ENCODE measurements at regions of chr19 and their contacts with region 1.

Region 1: DNA sequence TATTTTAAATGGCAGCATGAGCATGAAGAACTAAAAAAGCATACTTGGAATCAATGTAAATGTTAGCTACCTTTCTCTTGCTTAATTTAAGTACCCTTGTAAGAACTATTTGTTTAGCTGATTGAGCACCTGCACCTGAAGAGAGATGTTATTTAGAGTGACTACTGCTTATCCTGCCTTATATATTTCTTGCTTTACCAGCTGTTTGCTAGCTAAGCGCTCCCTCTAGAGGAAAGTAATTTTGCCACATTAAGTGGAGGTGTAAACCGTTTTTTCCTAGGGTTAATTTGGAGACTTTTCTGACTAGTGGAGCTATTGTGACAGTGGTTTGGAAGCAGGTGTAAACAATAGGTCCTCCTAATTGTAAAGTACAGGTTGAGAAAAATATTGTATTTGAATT is 19.4 kb upstream of the PSG2 start:
- DNase-seq: peak; percentile 24
- ATAC-seq: no peak
- H3K4me3 ChIP-seq: no peak overlapping the region
- H3K27ac ChIP-seq: no peak overlapping the region
- H3K4me1 ChIP-seq: peaks cover 6% of the 10 kb centered on the region; the same call in 1 of the 2 replicates
- H3K27me3 ChIP-seq: no peaks in the 10 kb centered on the region
- CTCF ChIP-seq: peak; percentile 39; the same call in 1 of the 2 replicates

Region 2: DNA sequence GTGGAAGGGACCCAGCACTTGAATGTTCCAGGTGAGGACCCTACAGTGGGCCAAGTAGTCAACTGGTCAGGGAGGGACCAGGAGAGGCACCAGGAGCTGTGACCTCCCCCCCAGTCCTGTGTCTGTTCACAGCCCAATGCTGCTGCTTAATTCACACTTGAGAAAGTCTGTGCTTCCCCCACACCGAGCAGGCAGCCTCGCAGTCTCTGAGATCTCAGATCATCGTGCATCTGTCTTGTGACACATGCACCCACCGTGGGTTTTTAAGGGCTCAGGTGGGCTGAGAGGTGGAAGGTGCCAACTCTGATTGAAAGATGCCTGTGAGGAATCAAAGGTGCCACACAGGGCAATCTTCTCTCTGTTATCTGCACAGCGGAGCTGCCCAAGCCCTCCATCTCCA is 1387.4 kb before region 1 on chr19:
- CTCF ChIA-PET with region 1: no interaction called
- POLR2A ChIA-PET with region 1: no interaction called
- intact Hi-C with region 1: no loop called
- DNase-seq: no peak
- ATAC-seq: no peak
- H3K4me3 ChIP-seq: no peak overlapping the region
- H3K27ac ChIP-seq: no peak overlapping the region
- H3K4me1 ChIP-seq: no peaks in the 10 kb centered on the region
- H3K27me3 ChIP-seq: no peaks in the 10 kb centered on the region
- CTCF ChIP-seq: no peak

Region 3: GRCh38 chr19:42919511-42920021 is 182.4 kb before region 1 on chr19:
- CTCF ChIA-PET with region 1: no interaction called
- POLR2A ChIA-PET with region 1: no interaction called
- intact Hi-C with region 1: loop called (anchors 10 kb)
- DNase-seq: no peak
- ATAC-seq: no peak
- H3K4me3 ChIP-seq: no peak overlapping the region
- H3K27ac ChIP-seq: no peak overlapping the region
- H3K4me1 ChIP-seq: no peaks in the 10 kb centered on the region
- H3K27me3 ChIP-seq: no peaks in the 10 kb centered on the region
- CTCF ChIP-seq: peak; percentile 42; the same call in 1 of the 2 replicates

Region 4: GRCh38 chr19:43191191-43191590 is 89.2 kb after region 1 on chr19:
- CTCF ChIA-PET with region 1: no interaction called
- POLR2A ChIA-PET with region 1: no interaction called
- intact Hi-C with region 1: loop called (anchors 1 kb)
- DNase-seq: no peak
- ATAC-seq: no peak
- H3K4me3 ChIP-seq: no peak overlapping the region
- H3K27ac ChIP-seq: no peak overlapping the region
- H3K4me1 ChIP-seq: no peaks in the 10 kb centered on the region
- H3K27me3 ChIP-seq: no peaks in the 10 kb centered on the region
- CTCF ChIP-seq: no peak

Measured in PC-3 (cell line).